IMR-90 (cell line): ENCODE measurements at regions of chr11 and their contacts with region 1.

Region 1: DNA sequence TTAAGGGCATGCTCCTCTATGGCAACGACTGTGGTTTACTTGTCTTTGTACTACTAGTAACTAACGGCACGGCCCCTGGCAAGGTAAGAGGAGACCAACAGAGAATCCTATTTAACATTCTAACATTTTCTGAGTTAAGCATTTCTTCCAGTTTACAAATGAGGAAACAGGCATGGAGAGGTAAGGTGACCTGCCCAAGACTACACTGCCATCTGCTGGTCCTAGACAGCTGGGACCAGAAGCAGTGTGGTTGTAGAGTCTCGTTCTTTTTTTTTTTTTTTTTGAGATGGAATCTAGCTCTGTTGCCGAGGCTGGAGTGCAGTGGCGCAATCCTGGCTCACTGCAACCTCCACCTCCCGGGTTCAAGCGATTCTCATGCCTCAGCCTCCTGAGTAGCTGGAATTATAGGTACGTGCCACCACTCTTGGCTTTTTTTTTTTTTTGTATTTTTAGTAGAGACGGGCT is 5.3 kb upstream of the RAPSN start:
- DNase-seq: peak; percentile 85
- ATAC-seq: peak; percentile 93
- H3K4me3 ChIP-seq: no peak overlapping the region
- H3K27ac ChIP-seq: no peak overlapping the region
- H3K4me1 ChIP-seq: no peaks in the 10 kb centered on the region
- H3K27me3 ChIP-seq: no peaks in the 10 kb centered on the region
- CTCF ChIP-seq: peak; percentile 81
- POLR2A ChIP-seq: no peak
- RAD21 ChIP-seq: peak; percentile 85

Region 2: DNA sequence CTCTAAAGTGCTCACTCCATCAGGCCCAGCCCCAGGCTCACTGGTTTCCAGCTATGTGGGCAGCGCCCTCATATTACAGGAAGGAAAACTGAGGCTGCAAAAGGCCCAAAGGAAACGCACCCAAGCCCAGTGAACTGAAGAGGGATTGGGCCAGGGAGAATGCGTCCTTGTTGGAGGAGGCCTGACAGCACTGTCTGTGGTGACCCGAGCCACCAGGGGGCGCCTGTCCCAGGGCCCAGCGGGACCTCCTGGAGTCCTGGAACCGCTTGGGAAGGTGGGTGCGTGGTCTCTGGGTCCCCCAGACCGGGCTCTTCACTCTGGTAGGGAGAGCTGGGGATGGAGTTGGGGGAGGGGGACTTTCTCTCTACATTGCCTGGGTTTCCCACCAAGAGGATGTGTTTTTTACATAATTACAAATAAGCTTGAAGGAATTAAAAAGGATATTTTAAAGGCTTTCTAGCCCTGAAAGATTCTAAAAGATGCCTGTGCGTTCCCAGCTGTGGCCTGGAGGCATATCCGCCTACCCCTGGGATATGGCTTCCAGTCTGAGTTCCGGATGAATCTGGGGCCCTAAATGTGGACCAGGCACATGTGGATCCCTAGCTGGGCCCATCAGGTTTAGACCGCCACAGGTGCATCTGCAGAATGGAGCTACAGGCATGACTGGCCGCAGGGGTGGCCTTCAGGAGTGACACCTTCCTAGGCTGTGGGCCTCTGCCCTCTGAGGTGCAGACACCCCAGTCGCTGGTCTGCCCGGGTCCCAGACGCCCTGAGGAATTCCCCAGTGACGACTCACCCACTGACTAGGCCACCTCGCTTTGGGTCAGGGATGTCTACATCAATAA is 80.1 kb before region 1 on chr11:
- CTCF ChIA-PET with region 1: interaction called, 6 read pairs
- POLR2A ChIA-PET with region 1: no interaction called
- dilution Hi-C with region 1: no loop called
- in situ Hi-C with region 1: no loop called
- intact Hi-C with region 1: loop called (anchors 1 kb)
- DNase-seq: peak; percentile 62
- ATAC-seq: peak; percentile 98
- H3K4me3 ChIP-seq: no peak overlapping the region
- H3K27ac ChIP-seq: no peak overlapping the region
- H3K4me1 ChIP-seq: peaks cover 5% of the 10 kb centered on the region
- H3K27me3 ChIP-seq: peaks cover 4% of the 10 kb centered on the region
- CTCF ChIP-seq: peak; percentile 88
- POLR2A ChIP-seq: no peak
- RAD21 ChIP-seq: peak; percentile 76